Activated naive CD4-positive, alpha-beta T cell treated with anti-CD3 and anti-CD28 coated beads for 36 hours (primary cell): ENCODE measurements at regions of chr16 and their contacts with region 1.

Region 1: GRCh38 chr16:20741554-20742285 is at the start of gene THUMPD1:
- DNase-seq: peak; percentile 100
- H3K4me3 Mint-ChIP-seq: peak within 1 kb of the TSS; percentile 94
- H3K27ac Mint-ChIP-seq: peak within 1 kb of the TSS; percentile 95
- H3K4me1 Mint-ChIP-seq: peaks cover 29% of the 10 kb centered on the region
- H3K27me3 Mint-ChIP-seq: no peaks in the 10 kb centered on the region
- total RNA-seq, gene THUMPD1: 47.5 to 49.8 TPM

Region 2: DNA sequence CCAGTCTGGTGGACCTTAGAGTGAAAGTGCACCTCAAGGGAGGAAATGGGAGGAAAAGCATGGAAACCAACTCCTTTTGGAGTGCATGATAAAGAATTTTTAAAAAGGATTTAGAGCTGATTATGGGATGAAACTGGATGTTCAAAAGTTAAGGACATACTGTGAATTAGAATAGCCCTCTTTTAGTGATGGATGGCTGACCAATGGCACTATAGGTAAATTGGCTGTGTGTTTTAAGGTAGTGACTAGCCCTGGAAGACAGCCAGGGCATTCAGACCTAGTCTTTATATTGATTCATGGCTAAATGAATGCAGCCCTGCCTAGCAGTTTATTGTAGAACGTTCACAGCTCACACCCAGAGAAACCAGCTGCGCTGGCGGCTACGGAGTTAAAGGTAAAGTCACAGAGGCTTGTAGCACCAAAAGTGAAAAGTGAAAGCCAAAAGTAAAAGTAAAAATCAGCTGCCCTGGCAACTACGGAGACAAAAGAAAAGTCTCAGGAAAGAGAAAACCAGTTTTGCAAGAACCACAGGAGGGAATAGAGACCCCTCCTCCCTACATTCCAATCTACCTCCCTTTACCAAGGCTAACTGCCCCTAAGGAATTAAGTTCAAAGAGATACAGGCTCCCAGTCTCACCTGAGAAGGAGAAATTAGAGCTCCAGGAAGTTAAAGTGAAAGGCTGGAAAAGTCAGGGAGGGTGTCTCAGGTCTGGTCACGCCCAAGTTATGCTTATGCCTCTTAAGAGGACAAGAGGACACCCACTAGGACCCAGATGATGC is 66.0 kb before region 1 on chr16:
- CTCF ChIA-PET with region 1: interaction called, 3 read pairs
- intact Hi-C with region 1: loop called (anchors 2 kb)
- DNase-seq: peak; percentile 69
- H3K4me3 Mint-ChIP-seq: peak overlapping the region; percentile 75
- H3K27ac Mint-ChIP-seq: peak overlapping the region; percentile 31
- H3K4me1 Mint-ChIP-seq: peaks cover 33% of the 10 kb centered on the region
- H3K27me3 Mint-ChIP-seq: no peaks in the 10 kb centered on the region

Region 3: GRCh38 chr16:20704281-20704680 is 37.4 kb before region 1 on chr16:
- CTCF ChIA-PET with region 1: no interaction called
- intact Hi-C with region 1: no loop called
- DNase-seq: no peak
- H3K4me3 Mint-ChIP-seq: no peak overlapping the region
- H3K27ac Mint-ChIP-seq: no peak overlapping the region
- H3K4me1 Mint-ChIP-seq: no peaks in the 10 kb centered on the region
- H3K27me3 Mint-ChIP-seq: no peaks in the 10 kb centered on the region

Region 4: DNA sequence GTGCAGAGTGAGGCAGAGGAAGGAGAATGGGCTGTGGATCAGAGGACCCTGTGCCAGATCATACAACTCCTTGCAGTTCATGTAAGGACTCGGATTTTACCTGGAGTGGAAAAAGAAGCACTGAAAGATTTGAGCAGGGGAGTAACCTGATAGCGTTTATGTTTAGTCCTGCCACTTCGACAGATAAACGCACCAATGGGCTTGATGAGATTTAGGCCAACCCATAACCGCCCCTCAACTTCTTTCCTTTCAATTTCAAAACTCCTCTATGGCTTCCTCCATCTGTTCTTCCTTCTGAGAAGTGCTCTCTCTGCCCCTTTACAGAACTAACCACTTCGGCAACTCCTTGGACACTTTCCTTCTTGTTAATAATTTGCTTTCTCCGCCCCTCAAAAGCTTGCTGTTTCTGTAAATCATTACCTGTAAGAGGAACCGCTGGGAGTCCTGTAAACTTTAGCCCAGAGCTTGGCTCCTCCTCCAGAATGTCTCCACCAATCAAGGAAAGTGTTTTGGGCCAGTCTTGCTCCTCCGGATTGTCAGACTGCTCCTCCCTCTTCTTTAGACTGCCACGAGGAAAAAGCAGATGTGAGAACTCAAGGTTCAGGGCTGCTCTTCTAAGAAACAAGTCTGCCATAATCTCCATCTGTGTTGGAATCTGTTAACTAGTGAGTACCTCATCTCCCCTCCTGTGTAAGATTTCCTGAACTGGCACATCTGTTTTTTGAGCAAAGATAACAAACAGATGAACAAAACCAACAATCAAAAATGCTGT is 21.9 kb after region 1 on chr16 and contains the start of gene ACSM3:
- CTCF ChIA-PET with region 1: interaction called, 3 read pairs
- intact Hi-C with region 1: loop called (anchors 1 kb)
- DNase-seq: peak; percentile 83
- H3K4me3 Mint-ChIP-seq: peak within 1 kb of the TSS; percentile 87
- H3K27ac Mint-ChIP-seq: peak within 1 kb of the TSS; percentile 94
- H3K4me1 Mint-ChIP-seq: peaks cover 25% of the 10 kb centered on the region
- H3K27me3 Mint-ChIP-seq: no peaks in the 10 kb centered on the region
- total RNA-seq, gene ACSM3: 29.6 to 35.0 TPM

Region 5: DNA sequence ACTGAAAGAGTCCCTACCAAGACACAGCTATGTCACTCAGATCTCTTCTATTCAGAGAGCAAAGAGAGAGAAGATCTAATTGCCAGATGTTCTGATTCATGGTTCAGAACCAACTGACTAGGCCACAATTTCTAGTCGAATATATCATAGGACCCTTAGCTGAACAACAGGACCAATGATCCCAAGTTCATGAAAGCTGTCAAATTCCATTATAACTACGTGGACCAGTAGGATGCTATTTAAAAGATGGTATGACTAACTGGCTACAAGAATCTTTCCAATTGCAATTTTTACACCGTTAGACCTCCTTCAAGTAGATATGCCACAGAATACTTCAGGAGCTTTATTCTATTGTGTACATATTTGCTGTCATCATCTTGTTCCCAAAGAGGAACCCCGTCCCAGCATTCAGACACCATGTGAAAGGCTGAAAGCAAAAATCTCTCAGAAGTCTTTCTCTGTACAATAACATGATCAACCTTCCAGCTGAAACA is 132.4 kb after region 1 on chr16:
- CTCF ChIA-PET with region 1: no interaction called
- intact Hi-C with region 1: loop called (anchors 1 kb)
- DNase-seq: peak; percentile 30
- H3K4me3 Mint-ChIP-seq: no peak overlapping the region
- H3K27ac Mint-ChIP-seq: peak overlapping the region; percentile 78
- H3K4me1 Mint-ChIP-seq: peaks cover 53% of the 10 kb centered on the region
- H3K27me3 Mint-ChIP-seq: no peaks in the 10 kb centered on the region

Region 6: GRCh38 chr16:21023509-21024202 is 281.9 kb after region 1 on chr16:
- CTCF ChIA-PET with region 1: no interaction called
- intact Hi-C with region 1: no loop called
- DNase-seq: peak; percentile 22
- H3K4me3 Mint-ChIP-seq: no peak overlapping the region
- H3K27ac Mint-ChIP-seq: no peak overlapping the region
- H3K4me1 Mint-ChIP-seq: peaks cover 12% of the 10 kb centered on the region
- H3K27me3 Mint-ChIP-seq: peaks cover 1% of the 10 kb centered on the region